Activated naive CD4-positive, alpha-beta T cell treated with anti-CD3 and anti-CD28 coated beads for 36 hours (primary cell): ENCODE measurements at regions of chr3 and their contacts with region 1.

Region 1: GRCh38 chr3:71512000-71512399 is 71.5 kb downstream of the FOXP1 start:
- DNase-seq: peak; percentile 59
- H3K4me3 Mint-ChIP-seq: no peak overlapping the region
- H3K27ac Mint-ChIP-seq: peak overlapping the region; percentile 6
- H3K4me1 Mint-ChIP-seq: peaks cover 12% of the 10 kb centered on the region
- H3K27me3 Mint-ChIP-seq: no peaks in the 10 kb centered on the region

Region 2: GRCh38 chr3:70531063-70531657 is 980.8 kb before region 1 on chr3:
- CTCF ChIA-PET with region 1: no interaction called
- intact Hi-C with region 1: loop called (anchors 5 kb)
- DNase-seq: no peak
- H3K4me3 Mint-ChIP-seq: no peak overlapping the region
- H3K27ac Mint-ChIP-seq: no peak overlapping the region
- H3K4me1 Mint-ChIP-seq: no peaks in the 10 kb centered on the region
- H3K27me3 Mint-ChIP-seq: peaks cover 1% of the 10 kb centered on the region

Region 3: GRCh38 chr3:70550723-70551319 is 961.2 kb before region 1 on chr3:
- CTCF ChIA-PET with region 1: interaction called, 3 read pairs
- intact Hi-C with region 1: loop called (anchors 1 kb)
- DNase-seq: peak; percentile 88
- H3K4me3 Mint-ChIP-seq: no peak overlapping the region
- H3K27ac Mint-ChIP-seq: no peak overlapping the region
- H3K4me1 Mint-ChIP-seq: no peaks in the 10 kb centered on the region
- H3K27me3 Mint-ChIP-seq: no peaks in the 10 kb centered on the region

Region 4: GRCh38 chr3:70716832-70717231 is 795.2 kb before region 1 on chr3:
- CTCF ChIA-PET with region 1: no interaction called
- intact Hi-C with region 1: loop called (anchors 10 kb)
- DNase-seq: peak; percentile 24
- H3K4me3 Mint-ChIP-seq: no peak overlapping the region
- H3K27ac Mint-ChIP-seq: no peak overlapping the region
- H3K4me1 Mint-ChIP-seq: peaks cover 2% of the 10 kb centered on the region
- H3K27me3 Mint-ChIP-seq: peaks cover 4% of the 10 kb centered on the region

Region 5: GRCh38 chr3:71251156-71251775 is 260.7 kb before region 1 on chr3:
- CTCF ChIA-PET with region 1: no interaction called
- intact Hi-C with region 1: loop called (anchors 5 kb)
- DNase-seq: no peak
- H3K4me3 Mint-ChIP-seq: no peak overlapping the region
- H3K27ac Mint-ChIP-seq: peak overlapping the region; percentile 39
- H3K4me1 Mint-ChIP-seq: peaks cover 79% of the 10 kb centered on the region
- H3K27me3 Mint-ChIP-seq: no peaks in the 10 kb centered on the region

Region 6: GRCh38 chr3:71495708-71496472 is 16.1 kb before region 1 on chr3:
- CTCF ChIA-PET with region 1: interaction called, 25 read pairs
- intact Hi-C with region 1: no loop called
- DNase-seq: peak; percentile 43
- H3K4me3 Mint-ChIP-seq: peak overlapping the region; percentile 49
- H3K27ac Mint-ChIP-seq: peak overlapping the region; percentile 73
- H3K4me1 Mint-ChIP-seq: peaks cover 83% of the 10 kb centered on the region
- H3K27me3 Mint-ChIP-seq: no peaks in the 10 kb centered on the region

Region 7: DNA sequence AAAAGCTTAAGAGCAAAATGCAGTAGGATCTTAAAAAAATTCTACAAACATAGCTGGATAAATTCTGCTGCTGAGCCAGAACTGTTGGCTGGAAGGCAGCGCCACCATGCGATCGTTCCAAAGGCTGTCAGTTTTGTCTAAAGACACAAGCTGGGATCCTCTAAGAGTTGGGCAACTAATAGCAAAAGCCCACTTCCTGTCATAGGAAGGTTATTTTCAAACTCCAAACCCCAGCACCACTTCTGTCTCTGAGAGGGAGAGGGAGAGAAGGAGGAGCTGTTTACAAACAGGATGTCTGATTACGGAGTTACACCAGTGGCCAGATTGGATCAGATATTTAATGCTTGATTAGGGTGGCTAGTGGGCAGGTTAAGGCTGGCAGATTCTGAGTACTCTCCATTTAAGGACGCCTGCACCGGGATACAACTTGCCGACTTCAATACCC is 169.2 kb after region 1 on chr3:
- CTCF ChIA-PET with region 1: interaction called, 3 read pairs
- intact Hi-C with region 1: loop called (anchors 10 kb)
- DNase-seq: peak; percentile 79
- H3K4me3 Mint-ChIP-seq: no peak overlapping the region
- H3K27ac Mint-ChIP-seq: no peak overlapping the region
- H3K4me1 Mint-ChIP-seq: peaks cover 10% of the 10 kb centered on the region
- H3K27me3 Mint-ChIP-seq: no peaks in the 10 kb centered on the region